Activated naive CD4-positive, alpha-beta T cell treated with anti-CD3 and anti-CD28 coated beads for 36 hours (primary cell): ENCODE measurements at regions of chr19 and their contacts with region 1.

Region 1: DNA sequence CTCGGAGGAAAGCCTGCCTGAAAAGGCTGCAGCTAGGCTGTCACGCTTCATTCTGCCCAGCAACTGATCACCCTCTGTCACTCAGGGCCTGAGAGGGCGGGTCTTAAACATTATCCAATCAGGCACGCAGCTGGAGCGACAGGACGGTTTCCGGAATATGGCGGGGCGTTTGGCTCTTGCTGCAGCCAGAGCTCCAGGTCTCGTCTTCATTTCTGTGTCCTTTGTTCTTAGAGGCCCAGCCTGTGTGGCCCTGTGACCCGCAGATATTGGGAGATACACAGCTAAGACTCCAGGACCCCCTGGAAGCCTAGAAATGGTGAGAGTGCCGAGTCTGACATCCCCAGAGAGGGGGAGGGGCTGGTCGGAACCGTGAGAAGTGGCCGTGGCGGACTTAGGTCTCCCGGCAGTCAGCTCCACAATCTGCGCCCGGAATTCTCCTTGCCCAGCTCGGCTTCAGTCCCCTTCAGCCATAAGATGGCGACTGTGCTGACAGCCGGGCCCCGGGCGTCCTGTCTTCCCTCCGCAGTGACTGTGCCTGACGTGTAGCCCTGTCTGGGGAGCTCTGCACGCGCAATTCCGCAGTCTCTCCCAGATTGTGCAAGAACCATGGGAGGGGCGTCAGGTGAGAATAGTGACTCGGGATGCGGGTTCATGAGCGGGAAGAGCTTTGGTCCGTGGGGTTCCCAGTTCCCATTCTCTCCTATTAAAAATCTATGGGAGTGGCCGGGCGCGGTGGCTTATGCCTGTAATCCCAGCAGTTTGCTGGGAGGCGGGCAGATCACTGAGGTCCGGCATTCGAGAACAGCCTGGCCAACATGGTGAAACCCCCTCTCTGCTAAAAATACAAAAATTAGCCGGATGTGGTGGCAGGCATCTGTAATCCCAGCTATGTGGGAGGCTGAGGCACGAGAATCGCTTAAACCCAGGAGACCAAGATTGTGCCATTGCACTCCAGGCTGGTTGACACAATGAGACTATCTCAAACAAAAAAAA is at the start of gene ZNF429:
- DNase-seq: peak; percentile 96
- H3K4me3 Mint-ChIP-seq: peak within 1 kb of the TSS; percentile 95
- H3K27ac Mint-ChIP-seq: peak within 1 kb of the TSS; percentile 97
- H3K4me1 Mint-ChIP-seq: peaks cover 30% of the 10 kb centered on the region
- H3K27me3 Mint-ChIP-seq: no peaks in the 10 kb centered on the region
- total RNA-seq, gene ZNF429: 10.2 TPM

Region 2: GRCh38 chr19:20776083-20777076 is 729.4 kb before region 1 on chr19 and contains the start of gene ZNF66:
- CTCF ChIA-PET with region 1: no interaction called
- intact Hi-C with region 1: loop called (anchors 1 kb)
- DNase-seq: peak; percentile 98
- H3K4me3 Mint-ChIP-seq: peak within 1 kb of the TSS; percentile 100
- H3K27ac Mint-ChIP-seq: peak within 1 kb of the TSS; percentile 95
- H3K4me1 Mint-ChIP-seq: peaks cover 18% of the 10 kb centered on the region
- H3K27me3 Mint-ChIP-seq: no peaks in the 10 kb centered on the region
- total RNA-seq, gene ZNF66: 3.9 to 4.9 TPM

Region 3: DNA sequence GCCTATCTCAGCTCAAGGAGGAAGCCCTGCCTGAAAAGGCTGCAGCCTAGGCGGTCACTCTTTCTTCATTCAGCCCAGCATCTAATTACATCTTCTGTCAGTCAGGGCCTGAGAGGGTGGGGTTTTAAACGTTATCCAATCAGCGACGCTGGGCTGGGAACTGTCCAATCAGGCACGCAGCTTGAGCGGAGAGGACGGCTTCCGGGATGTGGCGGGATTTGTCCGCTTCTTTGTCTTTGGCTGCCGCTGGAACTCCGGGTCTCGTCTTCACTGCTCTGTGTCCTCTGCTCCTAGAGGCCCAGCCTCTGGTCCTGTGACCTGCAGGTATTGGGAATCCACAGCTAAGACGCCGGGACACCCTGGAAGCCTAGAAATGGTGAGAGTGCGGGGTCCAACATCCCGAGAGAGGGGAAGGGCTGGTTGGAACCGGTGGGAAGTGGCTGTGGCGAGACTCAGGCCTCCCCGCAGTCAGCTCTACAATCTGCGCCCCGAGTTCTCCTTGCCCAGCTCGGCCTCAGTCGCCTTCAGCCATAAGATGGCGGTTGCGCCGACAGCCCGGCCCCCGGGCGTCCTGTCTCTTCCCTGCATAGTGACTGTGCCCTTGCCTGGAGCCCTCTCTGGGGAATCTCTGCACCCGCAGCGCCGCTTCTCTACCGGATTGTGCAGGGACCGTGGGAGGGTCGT is 146.8 kb before region 1 on chr19 and contains the start of gene ZNF738:
- CTCF ChIA-PET with region 1: no interaction called
- intact Hi-C with region 1: loop called (anchors 1 kb)
- DNase-seq: peak; percentile 93
- H3K4me3 Mint-ChIP-seq: peak within 1 kb of the TSS; percentile 99
- H3K27ac Mint-ChIP-seq: peak within 1 kb of the TSS; percentile 93
- H3K4me1 Mint-ChIP-seq: peaks cover 8% of the 10 kb centered on the region
- H3K27me3 Mint-ChIP-seq: no peaks in the 10 kb centered on the region
- total RNA-seq, gene ZNF738: 16.6 to 17.1 TPM

Region 4: GRCh38 chr19:21439201-21439751 is 66.5 kb before region 1 on chr19:
- CTCF ChIA-PET with region 1: no interaction called
- intact Hi-C with region 1: no loop called
- DNase-seq: no peak
- H3K4me3 Mint-ChIP-seq: no peak overlapping the region
- H3K27ac Mint-ChIP-seq: no peak overlapping the region
- H3K4me1 Mint-ChIP-seq: no peaks in the 10 kb centered on the region
- H3K27me3 Mint-ChIP-seq: no peaks in the 10 kb centered on the region

Region 5: DNA sequence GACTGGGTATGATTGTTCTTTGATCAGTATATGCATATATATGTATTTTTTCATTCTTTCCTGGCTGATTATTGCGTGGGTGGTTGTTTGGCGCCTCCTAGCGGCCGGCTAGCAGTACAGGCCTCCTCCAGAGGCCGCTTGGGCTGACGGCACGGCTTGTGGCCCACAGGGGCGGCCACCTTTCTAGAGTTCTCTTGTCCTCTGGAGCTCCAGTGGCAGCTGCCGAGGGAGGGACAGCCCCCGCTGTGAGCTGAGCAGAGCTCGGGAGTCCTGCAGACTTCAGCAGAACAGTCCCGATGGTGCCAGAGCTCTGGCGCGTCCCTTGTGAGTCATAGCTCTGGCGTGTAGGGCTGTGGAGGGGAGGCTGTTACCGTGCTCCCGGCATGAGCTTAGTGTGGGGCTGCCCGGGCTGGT is 22.9 kb before region 1 on chr19:
- CTCF ChIA-PET with region 1: interaction called, 15 read pairs
- intact Hi-C with region 1: no loop called
- DNase-seq: peak; percentile 79
- H3K4me3 Mint-ChIP-seq: no peak overlapping the region
- H3K27ac Mint-ChIP-seq: no peak overlapping the region
- H3K4me1 Mint-ChIP-seq: peaks cover 3% of the 10 kb centered on the region
- H3K27me3 Mint-ChIP-seq: no peaks in the 10 kb centered on the region

Region 6: DNA sequence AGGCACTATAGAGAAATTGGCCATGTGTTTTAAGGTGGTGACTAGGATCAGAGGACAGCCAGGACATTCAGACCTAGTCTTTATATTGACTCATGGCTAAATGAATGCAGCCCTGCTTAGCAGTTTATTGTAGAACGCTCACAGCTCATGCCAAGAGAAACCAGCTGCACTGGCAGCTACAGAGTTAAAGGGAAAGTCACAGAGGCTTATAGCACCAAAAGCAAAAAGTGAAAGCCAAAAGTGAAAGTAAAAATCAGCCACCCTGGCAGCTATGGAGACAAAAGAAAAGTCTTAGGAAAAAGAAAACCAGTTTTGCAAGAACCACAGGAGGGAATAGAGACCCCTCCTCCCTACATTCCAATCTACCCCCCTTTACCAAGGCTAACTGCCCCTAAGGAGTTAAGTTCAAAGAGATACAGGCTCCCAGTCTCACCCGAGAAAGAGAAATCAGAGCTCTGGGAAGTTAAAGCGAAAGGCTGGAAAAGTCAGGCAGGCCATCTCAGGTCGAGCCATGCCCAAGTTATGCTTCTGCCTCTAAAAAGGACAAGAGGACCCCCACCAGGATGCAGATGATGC is 98.7 kb after region 1 on chr19:
- CTCF ChIA-PET with region 1: no interaction called
- intact Hi-C with region 1: loop called (anchors 2 kb)
- DNase-seq: peak; percentile 38
- H3K4me3 Mint-ChIP-seq: peak overlapping the region; percentile 78
- H3K27ac Mint-ChIP-seq: peak overlapping the region; percentile 82
- H3K4me1 Mint-ChIP-seq: peaks cover 22% of the 10 kb centered on the region
- H3K27me3 Mint-ChIP-seq: no peaks in the 10 kb centered on the region

Region 7: GRCh38 chr19:21851596-21852345 is 346.0 kb after region 1 on chr19:
- CTCF ChIA-PET with region 1: no interaction called
- intact Hi-C with region 1: loop called (anchors 5 kb)
- DNase-seq: peak; percentile 97
- H3K4me3 Mint-ChIP-seq: peak overlapping the region; percentile 88
- H3K27ac Mint-ChIP-seq: peak overlapping the region; percentile 91
- H3K4me1 Mint-ChIP-seq: peaks cover 31% of the 10 kb centered on the region
- H3K27me3 Mint-ChIP-seq: no peaks in the 10 kb centered on the region